ENCODE measurements at regions of chr12 and their contacts with region 1.

Region 1: GRCh38 chr12:101407436-101408345 is at the start of gene ARL1:
- DNase-seq: peak; percentile 77
- H3K4me3 ChIP-seq: peak within 1 kb of the TSS; percentile 62 to 77
- H3K27ac ChIP-seq: peak within 1 kb of the TSS; percentile 83 to 94
- H3K4me1 ChIP-seq: peaks cover 9% of the 10 kb centered on the region
- H3K27me3 ChIP-seq: no peaks in the 10 kb centered on the region
- CTCF ChIP-seq: peak in 1 of 4 experiments; percentile 15
- POLR2A ChIP-seq: peak; percentile 21
- total RNA-seq, gene ARL1: 50.2 to 95.0 TPM

Region 2: DNA sequence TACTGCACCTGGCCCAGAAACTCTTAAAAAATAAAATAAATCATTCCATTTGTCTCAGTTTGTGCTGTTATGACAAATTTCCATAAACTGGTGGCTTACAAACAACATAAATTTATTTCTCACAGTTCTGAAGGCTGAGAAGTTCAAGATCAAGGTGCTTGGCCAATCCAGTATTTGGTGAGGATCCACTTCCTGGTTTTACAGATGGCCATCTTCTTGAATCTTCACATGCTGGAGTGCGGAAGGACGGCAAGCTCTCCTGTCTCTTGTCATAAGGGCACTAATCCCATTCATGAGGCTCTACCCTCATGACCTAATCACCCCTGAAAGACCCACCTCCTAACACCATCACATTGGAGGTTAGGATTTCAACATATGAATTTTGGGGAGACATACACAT is 157.2 kb after region 1 on chr12:
- intact Hi-C with region 1: loop called (anchors 10 kb)
- DNase-seq: no peak
- H3K4me3 ChIP-seq: no peak overlapping the region
- H3K27ac ChIP-seq: no peak overlapping the region
- H3K4me1 ChIP-seq: no peaks in the 10 kb centered on the region
- H3K27me3 ChIP-seq: no peaks in the 10 kb centered on the region
- CTCF ChIP-seq: no peak
- POLR2A ChIP-seq: no peak

Region 3: GRCh38 chr12:101697197-101697929 is 289.7 kb after region 1 on chr12 and contains the start of gene CHPT1:
- intact Hi-C with region 1: loop called (anchors 5 kb)
- DNase-seq: peak; percentile 57
- H3K4me3 ChIP-seq: peak within 1 kb of the TSS; percentile 83 to 91
- H3K27ac ChIP-seq: peak within 1 kb of the TSS; percentile 86 to 90
- H3K4me1 ChIP-seq: no peaks in the 10 kb centered on the region
- H3K27me3 ChIP-seq: no peaks in the 10 kb centered on the region
- CTCF ChIP-seq: no peak
- POLR2A ChIP-seq: peak; percentile 42
- total RNA-seq, gene CHPT1: 106 to 129 TPM

Region 4: DNA sequence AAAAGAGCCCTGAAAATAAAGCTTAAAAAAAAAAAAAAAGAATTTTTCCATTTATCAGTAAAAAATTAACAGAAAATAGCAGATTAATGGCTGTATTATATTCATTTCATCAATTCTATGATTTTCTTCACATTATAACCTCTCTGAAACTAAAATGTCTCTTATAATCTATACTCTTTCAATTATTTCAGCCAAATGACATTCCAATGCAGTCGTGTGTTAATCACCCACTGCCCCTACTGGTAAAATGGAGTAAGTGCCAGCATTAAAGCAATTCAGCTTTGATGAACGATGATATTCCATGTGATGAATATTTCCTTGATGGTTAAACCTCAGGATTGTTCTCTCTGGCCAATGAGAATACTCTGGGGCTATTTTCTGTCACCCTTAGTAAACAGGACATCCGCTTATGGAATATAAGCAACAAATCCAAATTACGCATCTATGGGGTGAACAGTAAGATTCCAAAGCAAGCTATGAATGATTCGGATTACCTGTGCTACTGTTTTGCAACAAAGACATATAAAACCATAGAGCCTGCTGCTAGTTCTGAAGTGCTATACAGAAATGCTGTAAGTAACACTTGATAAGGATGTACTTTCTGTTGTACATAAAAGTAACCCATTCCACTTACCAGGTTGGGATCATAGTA is 351.8 kb after region 1 on chr12:
- intact Hi-C with region 1: loop called (anchors 10 kb)
- DNase-seq: no peak
- H3K4me3 ChIP-seq: no peak overlapping the region
- H3K27ac ChIP-seq: no peak overlapping the region
- H3K4me1 ChIP-seq: no peaks in the 10 kb centered on the region
- H3K27me3 ChIP-seq: no peaks in the 10 kb centered on the region
- CTCF ChIP-seq: peak; percentile 13 to 76 (median 60)
- POLR2A ChIP-seq: no peak

Region 5: GRCh38 chr12:101830367-101831325 is 423.0 kb after region 1 on chr12 and contains the start of gene GNPTAB:
- intact Hi-C with region 1: loop called (anchors 5 kb)
- DNase-seq: peak; percentile 87
- H3K4me3 ChIP-seq: peak within 1 kb of the TSS; percentile 66 to 68
- H3K27ac ChIP-seq: peak within 1 kb of the TSS; percentile 68 to 74
- H3K4me1 ChIP-seq: no peaks in the 10 kb centered on the region
- H3K27me3 ChIP-seq: no peaks in the 10 kb centered on the region
- CTCF ChIP-seq: peak; percentile 72 to 95 (median 84)
- POLR2A ChIP-seq: no peak
- total RNA-seq, gene GNPTAB: 49.9 to 52.7 TPM